PC-9 (cell line): ENCODE measurements at regions of chr14 and their contacts with region 1.

Region 1: GRCh38 chr14:102694530-102695166 is 82.6 kb upstream of the TRAF3 start:
- DNase-seq: peak; percentile 66 to 80
- H3K4me3 ChIP-seq: no peak overlapping the region
- H3K27ac ChIP-seq: no peak overlapping the region
- H3K4me1 ChIP-seq: peaks cover 26% of the 10 kb centered on the region
- H3K27me3 ChIP-seq: no peaks in the 10 kb centered on the region
- CTCF ChIP-seq: peak; percentile 99

Region 2: GRCh38 chr14:101665515-101666078 is 1029.1 kb before region 1 on chr14:
- CTCF ChIA-PET with region 1: no interaction called
- POLR2A ChIA-PET with region 1: no interaction called
- intact Hi-C with region 1: loop called (anchors 10 kb)
- DNase-seq: peak; percentile 71 to 81
- H3K4me3 ChIP-seq: no peak overlapping the region
- H3K27ac ChIP-seq: no peak overlapping the region
- H3K4me1 ChIP-seq: no peaks in the 10 kb centered on the region
- H3K27me3 ChIP-seq: no peaks in the 10 kb centered on the region
- CTCF ChIP-seq: peak; percentile 99

Region 3: DNA sequence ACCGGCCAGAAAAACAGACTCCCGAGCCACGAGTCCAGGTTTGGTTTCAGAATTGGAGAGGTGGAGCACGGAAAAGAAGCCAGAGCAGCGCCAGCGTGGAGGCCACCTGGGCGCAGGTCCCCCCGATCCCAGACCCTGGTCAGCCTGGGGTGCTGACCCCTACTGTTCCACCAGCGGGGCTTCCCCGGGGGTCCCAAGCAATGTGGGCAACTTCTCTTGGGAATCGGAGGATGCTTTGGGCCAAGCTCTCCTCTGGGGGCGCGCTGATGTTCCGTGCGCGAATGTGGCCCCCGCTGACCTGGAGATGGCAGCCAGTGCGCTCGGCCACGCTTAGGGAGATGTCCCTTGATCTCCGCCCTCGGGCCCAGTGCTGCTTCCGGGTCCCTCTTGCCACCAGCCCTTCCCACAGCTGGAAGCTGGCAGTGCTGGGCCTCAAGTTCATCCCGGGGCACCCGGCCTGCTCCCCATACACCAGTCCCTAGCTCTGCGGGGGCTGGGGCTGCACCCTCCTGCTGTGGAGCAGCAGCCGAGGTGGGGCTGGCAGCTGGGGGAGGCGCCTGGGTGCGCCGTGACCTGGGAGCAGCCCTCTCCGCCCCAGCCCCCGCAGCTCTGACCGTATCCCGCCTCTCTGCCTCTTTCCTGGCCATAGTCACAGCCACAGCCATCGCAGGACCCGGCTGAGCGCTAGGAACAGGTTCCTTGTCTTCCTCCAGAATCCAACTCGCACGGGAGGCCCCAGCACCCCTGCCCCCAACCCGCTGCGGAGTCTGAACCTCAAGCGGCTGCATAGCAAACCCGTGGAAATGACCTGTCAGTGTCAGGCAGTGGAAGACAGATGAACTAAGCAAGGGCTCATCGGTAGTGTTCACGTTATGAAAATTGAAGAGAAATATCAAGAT is 11.0 kb before region 1 on chr14:
- CTCF ChIA-PET with region 1: interaction called, 13 read pairs
- POLR2A ChIA-PET with region 1: no interaction called
- intact Hi-C with region 1: no loop called
- DNase-seq: no peak
- H3K4me3 ChIP-seq: no peak overlapping the region
- H3K27ac ChIP-seq: no peak overlapping the region
- H3K4me1 ChIP-seq: no peaks in the 10 kb centered on the region
- H3K27me3 ChIP-seq: no peaks in the 10 kb centered on the region
- CTCF ChIP-seq: no peak

Region 4: DNA sequence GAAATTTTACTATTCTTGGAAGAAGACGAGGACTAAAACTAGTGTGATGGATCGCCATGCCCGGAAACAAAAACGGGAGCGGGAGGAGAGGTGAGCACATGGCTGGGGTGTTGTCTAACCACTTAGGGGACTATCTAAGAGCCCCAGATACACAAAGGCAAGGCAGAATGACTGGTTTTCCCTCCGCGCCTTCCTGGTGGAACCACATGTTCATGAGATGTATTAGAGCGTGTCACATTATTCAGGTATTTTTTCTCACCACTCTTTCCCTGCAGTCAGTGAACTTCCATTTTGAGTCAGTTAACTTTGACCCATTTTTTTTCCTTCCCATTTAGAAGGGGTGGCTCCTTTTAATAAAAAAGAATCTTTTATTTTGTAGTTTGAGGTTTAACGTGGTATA is 13.8 kb after region 1 on chr14:
- CTCF ChIA-PET with region 1: interaction called, 5 read pairs
- POLR2A ChIA-PET with region 1: interaction called, 24 read pairs
- intact Hi-C with region 1: no loop called
- DNase-seq: no peak
- H3K4me3 ChIP-seq: no peak overlapping the region
- H3K27ac ChIP-seq: no peak overlapping the region
- H3K4me1 ChIP-seq: peaks cover 15% of the 10 kb centered on the region
- H3K27me3 ChIP-seq: no peaks in the 10 kb centered on the region
- CTCF ChIP-seq: no peak

Region 5: DNA sequence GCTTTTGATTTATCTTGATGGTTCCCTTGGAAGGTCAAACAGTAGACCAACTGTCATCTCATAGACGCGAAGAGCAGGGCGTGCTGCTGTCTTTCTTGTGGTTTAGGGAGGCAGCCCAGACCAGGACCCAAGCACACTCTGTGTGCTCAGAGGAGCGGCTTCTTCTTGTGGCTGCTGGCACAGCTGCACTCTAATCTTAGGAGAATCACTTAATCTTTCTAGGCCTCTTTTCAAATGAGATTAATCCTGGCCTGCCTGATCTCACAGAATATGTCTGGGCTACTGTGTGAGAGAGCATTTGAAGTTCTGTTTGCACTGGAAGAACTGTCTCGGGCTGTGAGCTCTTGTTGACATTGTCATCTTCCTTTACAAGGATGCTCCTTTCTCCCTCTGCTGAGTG is 22.6 kb after region 1 on chr14:
- CTCF ChIA-PET with region 1: interaction called, 8 read pairs
- POLR2A ChIA-PET with region 1: interaction called, 12 read pairs
- intact Hi-C with region 1: no loop called
- DNase-seq: no peak
- H3K4me3 ChIP-seq: no peak overlapping the region
- H3K27ac ChIP-seq: no peak overlapping the region
- H3K4me1 ChIP-seq: peaks cover 2% of the 10 kb centered on the region; the same call in 1 of the 2 replicates
- H3K27me3 ChIP-seq: no peaks in the 10 kb centered on the region
- CTCF ChIP-seq: no peak

Region 6: DNA sequence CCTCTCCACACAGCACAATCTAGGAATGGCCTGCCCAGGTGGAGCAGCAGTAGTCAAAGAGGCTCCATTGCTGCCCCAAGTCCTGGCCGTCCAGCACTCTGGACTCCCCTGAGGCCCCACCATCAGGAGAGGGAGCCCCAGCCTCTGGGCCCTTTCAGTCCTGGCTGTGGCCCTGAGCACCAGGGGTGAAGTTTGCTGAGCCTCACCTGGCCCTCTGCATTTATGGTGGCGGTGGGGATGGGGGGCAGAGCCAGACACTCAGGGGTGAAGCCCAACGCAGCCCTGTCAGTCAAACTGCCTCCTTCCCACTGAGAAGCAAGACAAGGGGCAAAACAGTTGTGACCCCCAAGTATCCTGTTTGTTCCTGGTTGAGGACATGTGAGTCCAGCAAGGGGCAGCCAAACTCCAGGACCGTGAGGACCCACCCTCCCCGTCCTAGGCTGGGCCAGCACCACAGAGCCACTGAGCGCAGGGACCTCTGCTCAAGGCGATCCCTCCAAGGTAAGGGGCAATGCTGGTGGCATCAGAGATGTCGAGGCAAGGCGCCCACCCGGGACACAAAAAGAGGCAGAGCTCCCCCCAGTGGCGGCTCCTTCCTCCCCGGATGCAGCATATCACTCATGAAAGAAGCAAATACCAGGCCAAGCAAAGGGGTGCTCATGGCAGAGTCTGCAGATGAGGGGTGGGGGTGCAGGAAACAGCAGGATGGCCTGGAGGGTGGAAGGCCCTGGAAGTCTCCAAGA is 223.0 kb after region 1 on chr14:
- CTCF ChIA-PET with region 1: interaction called, 3 read pairs
- POLR2A ChIA-PET with region 1: no interaction called
- intact Hi-C with region 1: loop called (anchors 1 kb)
- DNase-seq: peak in 1 of 2 experiments; percentile 54
- H3K4me3 ChIP-seq: no peak overlapping the region
- H3K27ac ChIP-seq: no peak overlapping the region
- H3K4me1 ChIP-seq: no peaks in the 10 kb centered on the region
- H3K27me3 ChIP-seq: no peaks in the 10 kb centered on the region
- CTCF ChIP-seq: peak; percentile 82

Region 7: GRCh38 chr14:103546652-103547454 is 852.2 kb after region 1 on chr14:
- CTCF ChIA-PET with region 1: no interaction called
- POLR2A ChIA-PET with region 1: no interaction called
- intact Hi-C with region 1: loop called (anchors 5 kb)
- DNase-seq: peak; percentile 72 to 89
- H3K4me3 ChIP-seq: no peak overlapping the region
- H3K27ac ChIP-seq: no peak overlapping the region
- H3K4me1 ChIP-seq: peaks cover 23% of the 10 kb centered on the region
- H3K27me3 ChIP-seq: no peaks in the 10 kb centered on the region
- CTCF ChIP-seq: peak; percentile 100